Ascending aorta (tissue), 2 donors: ENCODE measurements at regions of chr11 and their contacts with region 1.

Region 1: GRCh38 chr11:45089676-45090499 is 56.6 kb upstream of the PRDM11 start:
- DNase-seq: peak in 1 of 2 donors; percentile 53
- H3K4me3 ChIP-seq: no peak overlapping the region
- H3K27ac ChIP-seq: peak overlapping the region; percentile 75 to 89
- H3K4me1 ChIP-seq: peaks cover 4 to 30% of the 10 kb centered on the region in 2 donors
- H3K27me3 ChIP-seq: no peaks in the 10 kb centered on the region
- CTCF ChIP-seq: peak in 1 of 3 experiments; percentile 21

Region 2: GRCh38 chr11:43845816-43846215 is 1244.1 kb before region 1 on chr11:
- intact Hi-C with region 1: no loop called
- DNase-seq: no peak
- H3K4me3 ChIP-seq: no peak overlapping the region
- H3K27ac ChIP-seq: no peak overlapping the region
- H3K4me1 ChIP-seq: no peaks in the 10 kb centered on the region
- H3K27me3 ChIP-seq: no peaks in the 10 kb centered on the region
- CTCF ChIP-seq: no peak

Region 3: DNA sequence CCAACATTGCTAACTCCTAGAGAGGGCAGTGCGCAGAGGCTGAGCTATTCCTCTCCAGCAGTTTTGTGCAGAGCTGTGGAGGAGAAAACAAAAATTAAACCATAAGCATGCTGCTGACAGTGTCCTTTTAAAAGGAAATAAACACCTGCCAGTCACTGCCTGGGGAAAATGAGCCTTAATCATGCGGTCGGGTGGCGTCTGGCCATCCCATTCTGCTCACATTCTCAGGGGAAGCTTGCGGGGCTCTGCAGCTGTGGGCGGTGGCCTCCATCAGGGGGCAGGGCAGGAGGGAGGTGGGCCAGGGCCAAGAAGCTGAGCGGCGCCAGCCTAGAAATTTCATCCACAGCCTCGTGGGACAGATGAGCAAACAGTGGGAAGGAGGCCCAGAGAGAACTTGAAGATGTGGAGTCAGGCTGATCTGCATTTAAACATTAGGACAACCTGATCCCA is 68.2 kb before region 1 on chr11:
- intact Hi-C with region 1: loop called (anchors 5 kb)
- DNase-seq: peak; percentile 49 to 83
- H3K4me3 ChIP-seq: no peak overlapping the region
- H3K27ac ChIP-seq: peak overlapping the region; percentile 15 to 39
- H3K4me1 ChIP-seq: peaks cover 7 to 15% of the 10 kb centered on the region in 2 donors
- H3K27me3 ChIP-seq: no peaks in the 10 kb centered on the region
- CTCF ChIP-seq: peak in 1 of 3 experiments; percentile 18